ENCODE measurements at regions of chr2 and their contacts with region 1.

Region 1: GRCh38 chr2:30421604-30422443 is 25.2 kb upstream of the LCLAT1 start:
- DNase-seq: peak in 1 of 2 donors; percentile 69
- ATAC-seq: no peak
- H3K4me3 ChIP-seq: no peak overlapping the region
- H3K4me3 Mint-ChIP-seq: peak overlapping the region; percentile 65
- H3K27ac ChIP-seq: peak overlapping the region; percentile 69
- H3K27ac Mint-ChIP-seq: peak overlapping the region; percentile 83 to 90
- H3K4me1 ChIP-seq: peaks cover 23% of the 10 kb centered on the region
- H3K4me1 Mint-ChIP-seq: peaks cover 34 to 36% of the 10 kb centered on the region in 2 donors
- H3K27me3 ChIP-seq: no peaks in the 10 kb centered on the region
- H3K27me3 Mint-ChIP-seq: no peaks in the 10 kb centered on the region
- CTCF ChIP-seq: no peak

Region 2: DNA sequence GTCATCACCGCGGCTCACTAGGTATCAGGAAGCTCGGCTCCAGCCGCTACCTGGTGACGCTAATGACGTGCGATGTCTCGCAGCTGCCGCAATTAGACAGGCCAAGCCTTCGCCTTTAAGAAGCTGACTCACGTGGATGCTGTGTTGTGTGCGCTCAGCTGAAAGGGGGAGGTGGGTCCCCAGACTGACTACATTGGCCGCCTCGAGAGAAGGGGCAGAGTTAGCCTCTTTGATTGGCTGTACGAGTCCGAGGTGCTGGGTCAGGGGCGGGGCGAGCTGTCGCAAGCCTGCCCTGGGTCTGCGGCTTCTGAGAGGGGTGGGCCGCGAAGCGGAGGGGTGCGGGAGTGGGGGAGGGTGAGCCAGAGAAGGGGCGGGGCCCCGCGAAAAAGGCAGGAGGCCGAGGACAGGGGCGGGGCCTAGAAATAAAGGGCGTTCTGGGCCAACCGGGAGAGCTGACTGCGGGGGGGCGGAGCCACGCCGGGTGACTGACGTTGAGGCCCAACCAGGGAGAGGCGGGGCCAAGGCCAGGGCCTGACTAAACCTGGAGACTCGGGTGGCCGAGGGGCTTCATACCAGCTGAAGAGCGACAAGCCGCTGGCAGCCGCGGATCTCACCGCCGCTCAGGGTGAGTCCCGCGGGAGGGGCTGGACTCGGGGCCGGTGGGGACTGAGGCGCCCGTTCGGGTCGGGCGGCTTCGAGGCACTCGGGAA is 275.2 kb before region 1 on chr2 and contains the start of gene YPEL5:
- intact Hi-C with region 1: loop called (anchors 1 kb)
- DNase-seq: peak; percentile 99 to 100
- ATAC-seq: peak; percentile 77 to 93 (median 81)
- H3K4me3 ChIP-seq: peak within 1 kb of the TSS; percentile 65
- H3K4me3 Mint-ChIP-seq: peak within 1 kb of the TSS; percentile 92
- H3K27ac ChIP-seq: peak within 1 kb of the TSS; percentile 96
- H3K27ac Mint-ChIP-seq: peak within 1 kb of the TSS; percentile 98
- H3K4me1 ChIP-seq: peaks cover 8% of the 10 kb centered on the region
- H3K4me1 Mint-ChIP-seq: peaks cover 43 to 46% of the 10 kb centered on the region in 2 donors
- H3K27me3 ChIP-seq: no peaks in the 10 kb centered on the region
- H3K27me3 Mint-ChIP-seq: no peaks in the 10 kb centered on the region
- CTCF ChIP-seq: no peak
- total RNA-seq, gene YPEL5: 569 to 1,094 (median 800) TPM

Region 3: DNA sequence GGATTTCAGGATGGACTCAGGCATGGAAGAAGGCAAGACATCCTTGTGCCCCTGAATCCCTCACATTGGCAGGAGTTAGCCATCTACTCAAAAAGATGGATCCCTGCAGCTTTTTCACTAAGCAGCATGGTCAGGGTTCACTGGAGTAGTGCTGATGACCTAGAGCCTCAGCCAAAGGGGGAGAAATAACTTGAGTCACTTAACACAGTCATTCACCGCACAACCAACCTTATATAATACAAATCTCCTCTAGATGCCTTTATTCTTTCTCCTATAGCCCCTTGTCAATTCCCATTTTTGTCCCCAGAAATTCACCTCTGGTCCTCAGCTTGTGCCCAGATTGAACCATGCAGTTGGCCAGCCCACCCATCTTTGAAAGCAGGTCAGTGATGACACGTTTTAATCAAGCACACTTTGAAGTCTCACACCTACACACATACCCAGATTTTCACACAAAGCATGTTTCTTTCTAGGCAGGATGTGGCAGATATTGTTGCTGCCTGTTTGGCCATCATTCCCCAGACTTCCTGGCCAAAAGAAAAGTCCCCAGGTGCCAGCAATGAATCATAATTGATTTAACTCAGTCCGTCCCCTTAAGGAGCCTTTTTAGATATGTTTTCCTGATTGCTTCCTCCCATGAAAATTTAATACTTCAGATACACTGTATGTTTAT is 106.3 kb before region 1 on chr2:
- intact Hi-C with region 1: loop called (anchors 1 kb)
- DNase-seq: peak in 1 of 2 donors; percentile 72
- ATAC-seq: peak; percentile 84 to 93 (median 85)
- H3K4me3 ChIP-seq: no peak overlapping the region
- H3K4me3 Mint-ChIP-seq: peak overlapping the region; percentile 48
- H3K27ac ChIP-seq: peak overlapping the region; percentile 15
- H3K27ac Mint-ChIP-seq: peak overlapping the region; percentile 76 to 85
- H3K4me1 ChIP-seq: peaks cover 30% of the 10 kb centered on the region
- H3K4me1 Mint-ChIP-seq: peaks cover 26 to 31% of the 10 kb centered on the region in 2 donors
- H3K27me3 ChIP-seq: no peaks in the 10 kb centered on the region
- H3K27me3 Mint-ChIP-seq: no peaks in the 10 kb centered on the region
- CTCF ChIP-seq: no peak

Region 4: GRCh38 chr2:30336978-30337841 is 84.6 kb before region 1 on chr2:
- intact Hi-C with region 1: loop called (anchors 1 kb)
- DNase-seq: peak; percentile 29 to 79
- ATAC-seq: peak; percentile 84 to 90 (median 90)
- H3K4me3 ChIP-seq: peak overlapping the region; percentile 1
- H3K4me3 Mint-ChIP-seq: peak overlapping the region; percentile 91
- H3K27ac ChIP-seq: peak overlapping the region; percentile 79
- H3K27ac Mint-ChIP-seq: peak overlapping the region; percentile 97 to 98
- H3K4me1 ChIP-seq: peaks cover 67% of the 10 kb centered on the region
- H3K4me1 Mint-ChIP-seq: peaks cover 58 to 66% of the 10 kb centered on the region in 2 donors
- H3K27me3 ChIP-seq: no peaks in the 10 kb centered on the region
- H3K27me3 Mint-ChIP-seq: no peaks in the 10 kb centered on the region
- CTCF ChIP-seq: no peak

Region 5: GRCh38 chr2:30447149-30448045 is 25.6 kb after region 1 on chr2 and contains the start of gene LCLAT1:
- intact Hi-C with region 1: loop called (anchors 1 kb)
- DNase-seq: peak; percentile 87 to 94
- ATAC-seq: peak; percentile 91 to 94 (median 93)
- H3K4me3 ChIP-seq: peak within 1 kb of the TSS; percentile 99
- H3K4me3 Mint-ChIP-seq: peak within 1 kb of the TSS; percentile 98
- H3K27ac ChIP-seq: peak within 1 kb of the TSS; percentile 82
- H3K27ac Mint-ChIP-seq: peak within 1 kb of the TSS; percentile 98
- H3K4me1 ChIP-seq: peaks cover 11% of the 10 kb centered on the region
- H3K4me1 Mint-ChIP-seq: peaks cover 32 to 39% of the 10 kb centered on the region in 2 donors
- H3K27me3 ChIP-seq: no peaks in the 10 kb centered on the region
- H3K27me3 Mint-ChIP-seq: no peaks in the 10 kb centered on the region
- CTCF ChIP-seq: no peak
- total RNA-seq, gene LCLAT1: 13.0 to 16.2 (median 14.2) TPM

Measured in natural killer cell (primary cell).